B cell (primary cell): ENCODE measurements at regions of chr1 and their contacts with region 1.

Region 1: DNA sequence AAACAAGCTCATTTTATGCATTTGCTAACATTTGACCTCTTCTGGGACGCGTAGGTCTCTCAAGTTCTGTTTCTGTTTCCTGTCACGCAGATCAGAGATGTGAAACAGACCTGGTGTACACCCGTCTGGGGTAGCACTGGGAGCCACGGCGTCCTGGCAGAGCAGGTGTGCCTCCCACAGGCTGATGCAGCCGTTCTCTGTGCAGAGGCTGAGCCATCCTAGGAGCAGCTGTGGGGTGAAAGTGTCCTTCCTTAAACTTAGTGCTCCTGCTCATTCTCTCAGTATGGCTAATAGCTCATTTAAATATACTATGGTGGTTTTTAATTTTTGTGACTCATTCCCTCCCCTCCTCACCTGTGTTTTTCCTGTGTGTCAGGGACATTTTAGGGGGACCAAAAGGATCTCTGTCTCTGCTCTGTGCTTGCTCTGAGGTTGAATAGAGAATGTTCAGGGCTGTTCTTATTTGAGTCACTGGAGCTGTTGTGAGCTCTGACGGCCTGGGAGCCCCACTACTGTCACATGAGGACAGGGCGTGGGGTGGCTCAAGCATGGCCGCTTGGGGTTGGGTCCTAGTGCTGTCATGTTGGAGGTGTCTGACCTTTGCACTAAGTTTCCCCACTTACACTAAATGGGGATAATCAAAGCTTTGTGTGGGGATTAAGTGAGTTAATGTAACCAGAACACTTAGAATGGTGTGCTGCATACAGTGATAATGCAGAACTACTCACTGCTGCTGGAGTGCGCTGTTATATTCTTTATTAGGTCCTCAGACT is 43.0 kb downstream of the GALNT2 start:
- DNase-seq: peak; percentile 67
- ATAC-seq: peak; percentile 89
- H3K4me3 ChIP-seq: no peak overlapping the region
- H3K4me3 Mint-ChIP-seq: peak overlapping the region; percentile 74
- H3K27ac ChIP-seq: peak overlapping the region in 1 of 2 donors; percentile 23
- H3K27ac Mint-ChIP-seq: peak overlapping the region; percentile 90
- H3K4me1 ChIP-seq: peaks cover 37 to 53% of the 10 kb centered on the region in 2 donors
- H3K4me1 Mint-ChIP-seq: peaks cover 86% of the 10 kb centered on the region
- H3K27me3 ChIP-seq: no peaks in the 10 kb centered on the region
- H3K27me3 Mint-ChIP-seq: no peaks in the 10 kb centered on the region
- CTCF ChIP-seq: no peak

Region 2: DNA sequence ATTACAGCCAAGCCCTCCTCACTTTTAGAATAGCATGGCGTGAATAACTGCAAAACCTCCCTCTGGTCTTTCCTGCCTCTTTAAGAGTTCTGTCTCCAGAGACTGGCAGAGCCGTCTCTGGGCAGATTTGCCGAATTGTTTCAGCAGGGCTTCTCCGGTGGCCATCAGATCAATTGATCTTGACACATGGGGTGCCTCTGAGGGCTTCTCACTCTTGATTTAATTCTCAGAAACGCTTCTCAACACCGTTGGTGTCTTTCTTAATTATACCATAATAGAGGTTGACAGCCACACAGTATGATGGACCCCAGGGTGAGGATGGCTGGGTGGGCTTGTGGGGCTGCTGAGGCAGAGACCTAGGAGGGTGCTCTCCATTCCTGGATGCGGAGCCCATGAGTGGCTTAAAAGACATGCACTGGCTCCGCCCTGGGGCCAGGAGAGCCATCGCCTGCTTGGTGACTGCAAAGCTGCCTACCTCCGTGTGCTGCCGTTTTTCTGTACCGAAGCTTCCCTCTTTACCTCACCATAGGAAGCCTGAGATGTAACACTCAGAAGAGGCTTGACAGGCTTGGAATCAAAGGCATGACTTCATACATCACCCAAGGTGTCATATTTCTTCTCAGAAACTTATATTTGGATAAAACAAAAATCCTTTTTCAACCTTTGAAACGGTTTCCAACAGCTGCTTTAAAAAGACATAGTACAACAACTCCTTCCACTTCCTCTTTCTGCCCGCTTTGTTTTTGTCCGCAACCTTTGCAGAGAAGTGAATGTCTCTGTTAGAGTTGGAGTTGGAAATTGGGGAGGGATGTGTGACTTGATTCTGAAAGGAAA is 39.9 kb after region 1 on chr1:
- CTCF ChIA-PET with region 1: interaction called, 5 read pairs
- POLR2A ChIA-PET with region 1: no interaction called
- intact Hi-C with region 1: loop called (anchors 5 kb)
- DNase-seq: peak; percentile 78
- ATAC-seq: peak; percentile 77
- H3K4me3 ChIP-seq: peak overlapping the region; percentile 8 to 64 (median 51)
- H3K4me3 Mint-ChIP-seq: peak overlapping the region; percentile 73
- H3K27ac ChIP-seq: peak overlapping the region; percentile 76 to 94
- H3K27ac Mint-ChIP-seq: peak overlapping the region; percentile 98
- H3K4me1 ChIP-seq: peaks cover 61 to 63% of the 10 kb centered on the region in 2 donors
- H3K4me1 Mint-ChIP-seq: peaks cover 71% of the 10 kb centered on the region
- H3K27me3 ChIP-seq: no peaks in the 10 kb centered on the region
- H3K27me3 Mint-ChIP-seq: no peaks in the 10 kb centered on the region
- CTCF ChIP-seq: no peak

Region 3: GRCh38 chr1:230215031-230215430 is 105.0 kb after region 1 on chr1:
- CTCF ChIA-PET with region 1: no interaction called
- POLR2A ChIA-PET with region 1: no interaction called
- intact Hi-C with region 1: loop called (anchors 5 kb)
- DNase-seq: peak; percentile 50
- ATAC-seq: no peak
- H3K4me3 ChIP-seq: no peak overlapping the region
- H3K4me3 Mint-ChIP-seq: peak overlapping the region; percentile 44
- H3K27ac ChIP-seq: peak overlapping the region; percentile 21 to 75
- H3K27ac Mint-ChIP-seq: peak overlapping the region; percentile 63
- H3K4me1 ChIP-seq: peaks cover 75 to 77% of the 10 kb centered on the region in 2 donors
- H3K4me1 Mint-ChIP-seq: peaks cover 89% of the 10 kb centered on the region
- H3K27me3 ChIP-seq: no peaks in the 10 kb centered on the region
- H3K27me3 Mint-ChIP-seq: no peaks in the 10 kb centered on the region
- CTCF ChIP-seq: no peak

Region 4: GRCh38 chr1:230292689-230293389 is 182.8 kb after region 1 on chr1:
- CTCF ChIA-PET with region 1: no interaction called
- POLR2A ChIA-PET with region 1: interaction called, 14 read pairs
- intact Hi-C with region 1: no loop called
- DNase-seq: no peak
- ATAC-seq: no peak
- H3K4me3 ChIP-seq: peak overlapping the region in 2 of 5 experiments; percentile 30 to 45
- H3K4me3 Mint-ChIP-seq: peak overlapping the region; percentile 65
- H3K27ac ChIP-seq: peak overlapping the region in 1 of 2 donors; percentile 66
- H3K27ac Mint-ChIP-seq: peak overlapping the region; percentile 84
- H3K4me1 ChIP-seq: peaks cover 45 to 49% of the 10 kb centered on the region in 2 donors
- H3K4me1 Mint-ChIP-seq: peaks cover 50% of the 10 kb centered on the region
- H3K27me3 ChIP-seq: no peaks in the 10 kb centered on the region
- H3K27me3 Mint-ChIP-seq: no peaks in the 10 kb centered on the region
- CTCF ChIP-seq: no peak